Left lung (tissue), 14 donors: ENCODE measurements at regions of chr10 and their contacts with region 1.

Region 1: GRCh38 chr10:29998142-29998808 is 61.1 kb downstream of the JCAD start:
- DNase-seq: peak in 3 of 4 donors; percentile 71 to 85 (median 73)
- ATAC-seq: peak; percentile 82
- H3K4me3 ChIP-seq: no peak overlapping the region
- H3K27ac ChIP-seq: no peak overlapping the region
- H3K4me1 ChIP-seq: peaks cover 18 to 38% of the 10 kb centered on the region in 2 donors
- H3K27me3 ChIP-seq: no peaks in the 10 kb centered on the region
- CTCF ChIP-seq: peak; percentile 90 to 99

Region 2: DNA sequence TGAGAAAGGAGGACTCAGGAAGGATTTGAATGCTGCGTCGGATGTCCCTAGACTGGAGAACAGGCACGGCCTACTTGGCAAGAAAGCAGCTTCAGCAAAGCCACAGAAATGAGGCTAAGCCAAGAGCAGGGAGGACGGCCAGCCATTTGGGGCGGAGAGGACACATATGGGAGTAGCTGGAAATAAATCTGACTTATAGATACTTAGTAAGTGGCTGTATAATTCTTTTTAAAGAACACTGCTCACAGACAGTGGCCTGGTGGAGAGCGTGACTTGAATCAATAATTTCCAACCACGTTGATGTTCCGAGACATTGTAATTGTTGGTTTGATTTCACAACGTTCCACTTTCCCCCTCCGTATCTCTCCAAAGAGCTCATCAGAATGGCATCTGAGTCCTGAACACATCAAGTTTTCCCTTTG is 128.9 kb after region 1 on chr10:
- intact Hi-C with region 1: no loop called
- DNase-seq: peak in 1 of 4 donors; percentile 37
- ATAC-seq: no peak
- H3K4me3 ChIP-seq: no peak overlapping the region
- H3K27ac ChIP-seq: peak overlapping the region in 1 of 2 donors; percentile 33
- H3K4me1 ChIP-seq: no peaks in the 10 kb centered on the region
- H3K27me3 ChIP-seq: no peaks in the 10 kb centered on the region
- CTCF ChIP-seq: no peak

Region 3: GRCh38 chr10:30384701-30385201 is 386.5 kb after region 1 on chr10:
- intact Hi-C with region 1: loop called in 1 of 2 experiments (anchors 10 kb)
- DNase-seq: peak in 1 of 4 donors; percentile 34
- ATAC-seq: peak; percentile 46
- H3K4me3 ChIP-seq: no peak overlapping the region
- H3K27ac ChIP-seq: no peak overlapping the region
- H3K4me1 ChIP-seq: no peaks in the 10 kb centered on the region
- H3K27me3 ChIP-seq: no peaks in the 10 kb centered on the region
- CTCF ChIP-seq: peak in 1 of 2 donors; percentile 23